Gastrocnemius medialis (tissue), 4 donors: ENCODE measurements at regions of chr14 and their contacts with region 1.

Region 1: GRCh38 chr14:54773171-54773975 is 129.3 kb downstream of the GCH1 start:
- DNase-seq: peak; percentile 63 to 79
- ATAC-seq: peak; percentile 80 to 85
- H3K4me3 ChIP-seq: no peak overlapping the region
- H3K27ac ChIP-seq: peak overlapping the region; percentile 83 to 94 (median 88)
- H3K4me1 ChIP-seq: peaks cover 78 to 83% of the 10 kb centered on the region in 2 donors
- H3K27me3 ChIP-seq: no peaks in the 10 kb centered on the region
- CTCF ChIP-seq: peak; percentile 70 to 87 (median 72)
- POLR2A ChIP-seq: no peak

Region 2: DNA sequence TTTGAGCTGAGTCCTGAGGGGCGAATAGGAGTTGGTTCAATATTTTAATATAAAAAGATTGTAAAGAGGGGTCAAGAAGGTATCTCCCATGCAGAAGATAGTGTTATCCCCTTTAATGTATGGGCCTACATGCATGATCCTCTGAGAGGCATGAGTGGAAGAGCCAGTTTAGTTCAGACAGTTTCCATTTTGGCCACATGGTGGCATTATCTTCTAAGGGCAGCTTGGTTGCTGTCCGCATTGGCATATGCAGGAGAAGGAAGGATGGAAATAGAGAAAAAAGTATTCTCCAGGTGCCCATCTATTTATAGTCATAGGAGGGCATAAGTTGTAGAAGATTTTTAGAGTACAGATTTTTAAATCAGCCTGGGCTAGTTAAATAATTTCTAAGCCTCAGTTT is 201.1 kb before region 1 on chr14:
- in situ Hi-C with region 1: loop called in 2 of 4 experiments (anchors 5 to 10 kb)
- intact Hi-C with region 1: no loop called
- DNase-seq: no peak
- ATAC-seq: no peak
- H3K4me3 ChIP-seq: no peak overlapping the region
- H3K27ac ChIP-seq: peak overlapping the region in 1 of 4 donors; percentile 99
- H3K4me1 ChIP-seq: peaks cover 67 to 78% of the 10 kb centered on the region in 2 donors
- H3K27me3 ChIP-seq: no peaks in the 10 kb centered on the region
- CTCF ChIP-seq: peak; percentile 24 to 65 (median 38)
- POLR2A ChIP-seq: no peak

Region 3: DNA sequence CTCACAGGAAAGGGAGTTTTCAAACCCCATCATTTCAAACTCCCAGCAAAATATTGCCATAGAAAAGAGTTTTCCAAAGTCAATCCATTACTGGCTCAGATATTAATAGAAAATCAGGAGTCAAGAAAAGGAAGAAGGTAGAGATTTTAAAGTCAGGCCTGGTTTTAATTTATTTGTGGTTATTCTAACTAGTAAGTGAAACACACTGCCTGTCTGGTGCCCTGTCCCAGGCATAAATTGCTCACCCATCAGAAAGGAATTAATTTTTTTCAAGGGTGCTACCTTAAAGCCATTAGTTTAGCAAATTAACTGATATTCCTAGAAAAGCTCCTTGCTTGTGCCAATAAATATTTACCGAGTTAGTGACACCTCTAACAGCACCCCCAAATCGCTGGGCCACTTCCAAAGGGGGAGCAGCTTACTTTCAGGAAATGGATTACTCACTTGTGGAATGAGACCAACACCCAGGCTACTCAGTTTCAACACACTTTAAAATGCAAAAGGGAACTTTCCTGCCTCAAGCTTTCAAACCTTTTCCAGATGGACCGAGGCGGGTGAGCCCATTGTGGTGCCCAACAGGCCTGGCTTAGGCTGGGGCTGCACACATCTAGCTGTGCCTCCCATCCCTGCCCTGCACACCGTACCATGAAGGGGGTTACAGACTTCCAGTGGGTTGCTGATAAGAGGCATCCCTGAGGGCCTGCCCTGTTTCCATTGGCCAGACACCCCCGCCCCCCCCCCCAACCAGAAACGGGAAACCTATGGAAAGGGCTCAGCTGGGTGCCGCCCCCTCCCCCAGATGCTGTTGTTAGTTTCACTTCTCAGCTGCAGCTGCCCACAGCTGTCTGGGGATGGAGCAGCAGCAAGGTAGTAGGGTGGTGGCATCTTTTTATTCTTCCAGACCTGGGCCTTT is 89.2 kb before region 1 on chr14:
- in situ Hi-C with region 1: loop called in 1 of 4 experiments (anchors 5 kb)
- intact Hi-C with region 1: loop called (anchors 2 kb)
- DNase-seq: peak in 1 of 2 donors; percentile 50
- ATAC-seq: no peak
- H3K4me3 ChIP-seq: no peak overlapping the region
- H3K27ac ChIP-seq: peak overlapping the region; percentile 86 to 99 (median 92)
- H3K4me1 ChIP-seq: peaks cover 56 to 64% of the 10 kb centered on the region in 2 donors
- H3K27me3 ChIP-seq: no peaks in the 10 kb centered on the region
- CTCF ChIP-seq: no peak
- POLR2A ChIP-seq: no peak

Region 4: GRCh38 chr14:54727929-54728328 is 45.4 kb before region 1 on chr14:
- in situ Hi-C with region 1: no loop called
- intact Hi-C with region 1: loop called (anchors 2 kb)
- DNase-seq: peak in 1 of 2 donors; percentile 51
- ATAC-seq: peak; percentile 71 to 75
- H3K4me3 ChIP-seq: peak overlapping the region in 3 of 4 donors; percentile 4 to 35 (median 16)
- H3K27ac ChIP-seq: peak overlapping the region; percentile 68 to 80 (median 73)
- H3K4me1 ChIP-seq: peaks cover 42 to 58% of the 10 kb centered on the region in 2 donors
- H3K27me3 ChIP-seq: no peaks in the 10 kb centered on the region
- CTCF ChIP-seq: no peak
- POLR2A ChIP-seq: no peak

Region 5: GRCh38 chr14:54762296-54762695 is 11.1 kb before region 1 on chr14:
- in situ Hi-C with region 1: no loop called
- intact Hi-C with region 1: no loop called
- DNase-seq: no peak
- ATAC-seq: no peak
- H3K4me3 ChIP-seq: no peak overlapping the region
- H3K27ac ChIP-seq: peak overlapping the region in 3 of 4 donors; percentile 21 to 56 (median 37)
- H3K4me1 ChIP-seq: peaks cover 13 to 17% of the 10 kb centered on the region in 2 donors
- H3K27me3 ChIP-seq: no peaks in the 10 kb centered on the region
- CTCF ChIP-seq: no peak
- POLR2A ChIP-seq: no peak

Region 6: DNA sequence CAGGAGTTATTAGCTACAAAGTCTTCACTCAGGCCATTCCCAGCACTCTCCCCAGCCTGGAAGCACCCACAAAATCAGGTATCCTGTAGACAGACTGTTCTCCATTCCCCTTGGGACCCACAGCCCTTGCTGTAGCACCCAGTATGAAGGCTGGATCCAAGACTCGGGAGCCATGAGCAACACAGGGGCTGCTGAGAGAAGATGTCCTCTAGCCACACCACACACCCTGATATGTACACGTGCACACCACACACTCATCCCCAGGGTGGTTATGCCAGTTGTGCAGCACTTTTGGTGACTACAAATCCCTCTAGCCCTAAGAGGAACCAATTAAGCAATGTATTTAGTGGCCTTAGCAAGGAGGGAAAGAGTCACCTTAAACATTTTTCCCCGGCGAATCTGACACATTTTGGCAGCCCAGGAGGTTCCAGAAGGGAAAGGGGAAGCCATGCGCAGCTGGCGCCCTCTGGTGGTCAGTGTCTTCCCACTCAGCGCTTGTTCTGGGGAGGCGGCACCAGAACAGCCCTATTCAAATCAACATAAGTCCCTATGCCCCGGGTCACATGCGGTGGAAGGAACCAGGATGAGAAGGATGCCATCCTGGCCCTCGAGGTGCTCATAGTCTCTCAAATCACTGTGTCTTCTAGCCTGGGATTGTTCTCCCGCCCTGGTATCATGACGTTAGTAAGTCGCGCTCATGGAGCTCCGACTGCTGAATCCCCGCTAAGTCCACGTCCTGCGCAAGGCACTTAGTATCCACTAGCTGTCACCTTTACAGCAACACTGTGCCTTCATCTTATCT is 32.3 kb after region 1 on chr14:
- in situ Hi-C with region 1: no loop called
- intact Hi-C with region 1: loop called (anchors 5 kb)
- DNase-seq: peak; percentile 59 to 79
- ATAC-seq: peak; percentile 92
- H3K4me3 ChIP-seq: peak overlapping the region in 1 of 4 donors; percentile 17
- H3K27ac ChIP-seq: no peak overlapping the region
- H3K4me1 ChIP-seq: peaks cover 0 to 5% of the 10 kb centered on the region in 2 donors
- H3K27me3 ChIP-seq: no peaks in the 10 kb centered on the region
- CTCF ChIP-seq: peak; percentile 89 to 97 (median 92)
- POLR2A ChIP-seq: no peak